CD4-positive, alpha-beta memory T cell (primary cell): ENCODE measurements at regions of chr6 and their contacts with region 1.

Region 1: GRCh38 chr6:8063761-8064637 is at the start of gene BLOC1S5:
- DNase-seq: peak; percentile 96 to 97 (median 96)
- H3K4me3 ChIP-seq: peak within 1 kb of the TSS; percentile 0 to 97
- H3K4me3 Mint-ChIP-seq: peak within 1 kb of the TSS; percentile 92 to 98 (median 94)
- H3K27ac ChIP-seq: peak within 1 kb of the TSS; percentile 92
- H3K27ac Mint-ChIP-seq: peak within 1 kb of the TSS; percentile 96 to 98 (median 97)
- H3K4me1 ChIP-seq: peaks cover 21% of the 10 kb centered on the region
- H3K4me1 Mint-ChIP-seq: peaks cover 19 to 36% (median 20%) of the 10 kb centered on the region in 4 donors
- H3K27me3 ChIP-seq: no peaks in the 10 kb centered on the region
- H3K27me3 Mint-ChIP-seq: no peaks in the 10 kb centered on the region
- total RNA-seq, gene BLOC1S5: 23.0 to 24.9 TPM

Region 2: DNA sequence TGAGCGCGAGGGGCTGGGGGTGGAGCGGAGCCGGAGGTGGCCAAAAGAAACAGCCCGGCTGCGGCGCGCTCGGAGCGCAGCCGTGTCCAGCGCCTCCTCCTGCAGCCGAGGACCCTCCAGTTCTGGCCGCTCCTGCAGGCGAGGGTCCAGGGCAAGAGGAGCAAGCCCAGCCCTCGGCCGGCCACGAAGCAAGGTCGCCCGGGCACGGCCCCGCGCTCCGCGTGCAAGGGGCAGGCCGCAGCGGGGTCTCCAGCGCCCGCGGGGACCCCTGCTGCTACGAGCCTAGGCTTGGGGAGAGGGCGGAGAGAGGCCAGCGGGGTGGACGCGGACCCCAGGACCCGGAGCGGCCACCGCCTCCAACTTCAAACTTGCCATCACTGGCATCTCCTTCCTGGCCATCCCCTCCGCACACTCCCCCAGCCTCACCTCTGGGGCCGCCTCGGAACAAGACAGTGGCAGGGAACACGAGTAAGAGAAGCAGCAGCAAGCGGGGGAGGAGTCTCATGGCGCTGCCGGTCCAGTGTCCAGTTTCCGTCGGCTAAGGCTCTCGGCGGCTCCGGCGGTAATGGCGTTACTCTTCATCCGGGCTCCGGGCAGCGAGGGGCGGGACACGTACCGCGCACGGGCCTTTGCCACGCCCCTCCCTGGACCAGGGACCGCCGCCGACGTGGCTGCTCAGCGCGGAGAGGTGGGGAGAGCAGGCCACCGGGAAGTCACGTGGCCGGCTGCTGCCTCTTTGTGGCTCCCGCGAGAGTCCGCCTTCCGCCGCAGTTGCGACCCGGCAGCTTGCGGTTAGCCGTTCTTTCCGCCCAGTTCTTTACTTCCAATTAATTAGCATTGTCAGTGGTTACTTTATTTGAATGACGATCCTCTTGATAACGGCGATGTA is 751.1 kb before region 1 on chr6 and contains the start of gene SSR1:
- CTCF ChIA-PET with region 1: no interaction called
- POLR2A ChIA-PET with region 1: no interaction called
- intact Hi-C with region 1: loop called (anchors 1 kb)
- DNase-seq: peak; percentile 89 to 93 (median 91)
- H3K4me3 ChIP-seq: peak within 1 kb of the TSS; percentile 95 to 97
- H3K4me3 Mint-ChIP-seq: peak within 1 kb of the TSS; percentile 91 to 100 (median 96)
- H3K27ac ChIP-seq: peak within 1 kb of the TSS; percentile 77
- H3K27ac Mint-ChIP-seq: peak within 1 kb of the TSS; percentile 83 to 98 (median 95)
- H3K4me1 ChIP-seq: peaks cover 53% of the 10 kb centered on the region
- H3K4me1 Mint-ChIP-seq: peaks cover 33 to 62% (median 47%) of the 10 kb centered on the region in 4 donors
- H3K27me3 ChIP-seq: no peaks in the 10 kb centered on the region
- H3K27me3 Mint-ChIP-seq: no peaks in the 10 kb centered on the region
- total RNA-seq, gene SSR1: 150 to 158 TPM

Region 3: DNA sequence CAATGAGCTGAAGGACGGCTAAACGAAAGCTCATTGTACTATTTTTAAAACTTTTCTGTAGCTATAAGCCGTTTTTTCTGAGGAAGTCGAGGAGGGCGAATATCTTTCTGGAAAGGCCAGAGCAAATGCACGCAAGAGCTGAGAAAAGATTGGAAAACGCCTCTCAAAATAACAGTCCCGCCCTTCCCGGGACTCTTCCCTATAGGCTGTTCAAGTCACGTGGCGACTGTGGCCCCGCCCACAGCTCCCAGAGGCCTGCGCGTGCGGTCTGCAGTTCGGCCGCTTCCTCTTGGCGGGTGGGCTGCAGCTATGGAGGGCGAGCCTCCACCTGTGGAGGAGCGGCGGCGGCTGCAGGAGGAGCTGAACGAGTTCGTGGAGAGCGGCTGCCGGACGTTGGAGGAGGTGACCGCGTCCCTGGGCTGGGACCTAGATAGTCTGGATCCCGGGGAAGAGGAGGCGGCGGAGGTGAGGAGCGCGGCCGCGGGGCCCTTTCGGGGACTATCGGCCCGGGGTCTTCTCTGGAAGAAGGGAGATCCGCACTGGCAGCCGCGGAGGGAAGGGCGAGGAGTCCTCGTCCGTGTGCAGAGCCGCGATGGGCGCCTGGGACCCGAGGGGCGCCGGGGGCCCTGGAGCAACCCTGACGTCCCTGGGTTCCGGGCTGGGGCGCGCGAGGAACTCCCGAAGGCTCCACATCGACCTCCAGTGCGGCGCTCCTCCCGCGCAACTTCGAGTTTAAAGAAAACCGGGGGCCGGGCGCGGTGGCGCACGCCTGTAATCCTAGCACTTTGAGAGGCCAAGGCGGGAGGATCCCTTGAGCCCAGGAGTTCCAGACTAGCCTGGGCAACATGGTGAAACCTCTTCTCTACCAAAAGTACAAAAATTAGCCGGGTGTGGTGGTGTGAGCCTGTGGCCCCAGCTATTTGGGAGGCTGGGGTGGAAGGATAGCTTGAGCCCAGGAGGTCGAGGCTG is 473.8 kb before region 1 on chr6 and contains the start of gene SNRNP48:
- CTCF ChIA-PET with region 1: no interaction called
- POLR2A ChIA-PET with region 1: interaction called, 5 read pairs
- intact Hi-C with region 1: loop called (anchors 10 kb)
- DNase-seq: peak; percentile 85 to 92 (median 87)
- H3K4me3 ChIP-seq: peak within 1 kb of the TSS; percentile 45 to 56
- H3K4me3 Mint-ChIP-seq: peak within 1 kb of the TSS; percentile 99 to 100 (median 99)
- H3K27ac ChIP-seq: peak within 1 kb of the TSS; percentile 64
- H3K27ac Mint-ChIP-seq: peak within 1 kb of the TSS; percentile 89 to 99 (median 96)
- H3K4me1 ChIP-seq: peaks cover 31% of the 10 kb centered on the region
- H3K4me1 Mint-ChIP-seq: peaks cover 37 to 48% (median 44%) of the 10 kb centered on the region in 4 donors
- H3K27me3 ChIP-seq: no peaks in the 10 kb centered on the region
- H3K27me3 Mint-ChIP-seq: no peaks in the 10 kb centered on the region
- total RNA-seq, gene SNRNP48: 24.0 to 24.4 TPM

Region 4: GRCh38 chr6:7910654-7911344 is 153.2 kb before region 1 on chr6 and contains the start of gene TXNDC5:
- CTCF ChIA-PET with region 1: interaction called, 3 read pairs
- POLR2A ChIA-PET with region 1: interaction called, 9 read pairs
- intact Hi-C with region 1: loop called (anchors 1 kb)
- DNase-seq: peak; percentile 57 to 63 (median 58)
- H3K4me3 ChIP-seq: peak within 1 kb of the TSS; percentile 29 to 70
- H3K4me3 Mint-ChIP-seq: peak within 1 kb of the TSS; percentile 79 to 86 (median 83)
- H3K27ac ChIP-seq: peak within 1 kb of the TSS; percentile 39
- H3K27ac Mint-ChIP-seq: peak within 1 kb of the TSS in 5 of 7 donors; percentile 57 to 86 (median 75)
- H3K4me1 ChIP-seq: peaks cover 17% of the 10 kb centered on the region
- H3K4me1 Mint-ChIP-seq: peaks cover 3 to 15% (median 8%) of the 10 kb centered on the region in 4 donors
- H3K27me3 ChIP-seq: no peaks in the 10 kb centered on the region
- H3K27me3 Mint-ChIP-seq: no peaks in the 10 kb centered on the region
- total RNA-seq, gene TXNDC5: 18.1 to 21.8 TPM

Region 5: GRCh38 chr6:7992002-7992815 is 71.8 kb before region 1 on chr6:
- CTCF ChIA-PET with region 1: no interaction called
- POLR2A ChIA-PET with region 1: no interaction called
- intact Hi-C with region 1: no loop called
- DNase-seq: no peak
- H3K4me3 ChIP-seq: no peak overlapping the region
- H3K4me3 Mint-ChIP-seq: no peak overlapping the region
- H3K27ac ChIP-seq: no peak overlapping the region
- H3K27ac Mint-ChIP-seq: no peak overlapping the region
- H3K4me1 ChIP-seq: no peaks in the 10 kb centered on the region
- H3K4me1 Mint-ChIP-seq: no peaks in the 10 kb centered on the region
- H3K27me3 ChIP-seq: no peaks in the 10 kb centered on the region
- H3K27me3 Mint-ChIP-seq: no peaks in the 10 kb centered on the region

Region 6: DNA sequence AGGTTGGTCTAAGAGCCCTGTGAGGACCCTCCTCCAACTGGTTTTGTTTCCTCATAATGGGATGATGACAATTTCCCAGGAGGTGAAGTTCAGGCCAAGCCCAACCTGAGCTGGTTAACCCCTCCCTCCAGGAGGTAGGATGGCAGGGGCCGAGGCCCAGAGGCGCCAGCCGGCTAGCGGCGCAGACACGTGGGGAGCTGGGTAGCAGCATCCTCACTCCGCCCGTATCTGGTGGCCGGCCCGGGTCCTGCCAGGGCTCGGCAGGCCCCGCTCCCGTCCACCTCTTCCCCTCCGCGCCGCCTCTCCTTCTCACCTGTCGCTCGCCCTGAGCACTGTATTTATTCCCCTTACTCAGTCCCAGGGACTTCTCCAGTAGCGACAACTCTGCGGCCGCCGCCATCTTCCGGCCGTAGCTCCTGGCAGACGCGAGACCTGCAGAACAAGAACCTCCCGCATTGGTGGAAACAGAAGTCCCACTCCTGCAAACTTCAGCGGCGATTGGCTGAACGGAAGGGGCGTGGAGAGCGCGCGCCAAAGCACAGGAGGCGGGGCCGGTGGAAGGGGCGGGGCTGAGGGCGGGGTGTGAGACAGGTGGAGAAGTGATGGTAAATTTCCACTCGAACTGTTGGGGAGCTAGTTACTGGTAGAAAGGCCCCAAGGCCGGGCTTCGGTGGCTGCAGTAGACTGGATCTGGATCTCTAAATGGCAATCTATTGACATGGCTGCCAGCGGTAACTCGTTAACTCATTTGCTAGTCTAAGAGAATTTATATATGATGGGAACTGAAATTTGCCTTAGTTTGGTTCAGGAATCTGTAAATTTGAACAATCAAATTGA is 38.3 kb after region 1 on chr6 and contains the start of gene EEF1E1:
- CTCF ChIA-PET with region 1: interaction called, 9 read pairs
- POLR2A ChIA-PET with region 1: interaction called, 69 read pairs
- intact Hi-C with region 1: loop called (anchors 1 kb)
- DNase-seq: peak; percentile 92 to 98 (median 94)
- H3K4me3 ChIP-seq: peak within 1 kb of the TSS; percentile 87 to 95
- H3K4me3 Mint-ChIP-seq: peak within 1 kb of the TSS; percentile 92 to 100 (median 97)
- H3K27ac ChIP-seq: peak within 1 kb of the TSS; percentile 79
- H3K27ac Mint-ChIP-seq: peak within 1 kb of the TSS; percentile 86 to 98 (median 96)
- H3K4me1 ChIP-seq: peaks cover 19% of the 10 kb centered on the region
- H3K4me1 Mint-ChIP-seq: peaks cover 17 to 30% (median 23%) of the 10 kb centered on the region in 4 donors
- H3K27me3 ChIP-seq: no peaks in the 10 kb centered on the region
- H3K27me3 Mint-ChIP-seq: peaks cover 6 to 9% of the 10 kb centered on the region in 2 donors
- total RNA-seq, gene EEF1E1: 14.8 to 20.7 TPM

Region 7: GRCh38 chr6:8683204-8683603 is 619.2 kb after region 1 on chr6:
- CTCF ChIA-PET with region 1: no interaction called
- POLR2A ChIA-PET with region 1: no interaction called
- intact Hi-C with region 1: no loop called
- DNase-seq: no peak
- H3K4me3 ChIP-seq: no peak overlapping the region
- H3K4me3 Mint-ChIP-seq: no peak overlapping the region
- H3K27ac ChIP-seq: no peak overlapping the region
- H3K27ac Mint-ChIP-seq: no peak overlapping the region
- H3K4me1 ChIP-seq: no peaks in the 10 kb centered on the region
- H3K4me1 Mint-ChIP-seq: no peaks in the 10 kb centered on the region
- H3K27me3 ChIP-seq: no peaks in the 10 kb centered on the region
- H3K27me3 Mint-ChIP-seq: no peaks in the 10 kb centered on the region